ENCODE measurements at regions of chr3 and their contacts with region 1.

Region 1: DNA sequence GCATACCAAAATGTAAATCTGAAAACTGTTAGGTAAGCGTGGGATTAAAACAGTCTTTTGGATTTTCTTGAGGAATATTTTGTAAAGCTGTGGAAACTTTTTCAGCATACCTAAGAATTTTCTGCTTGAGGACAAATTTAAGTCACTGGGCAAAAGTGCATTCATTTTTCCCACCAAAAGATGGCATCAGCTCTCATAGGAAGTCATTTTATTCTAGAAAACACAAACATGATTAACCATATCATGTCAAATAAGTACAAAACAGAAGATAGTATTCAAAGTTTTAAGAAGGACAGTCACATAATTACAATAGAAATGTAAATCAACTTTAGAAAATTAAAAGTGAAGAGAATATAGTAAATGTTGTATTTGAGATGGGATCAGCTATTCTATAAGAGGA is 63.5 kb downstream of the SLC49A4 start:
- DNase-seq: peak; percentile 37
- H3K4me3 Mint-ChIP-seq: no peak overlapping the region
- H3K27ac Mint-ChIP-seq: no peak overlapping the region
- H3K4me1 Mint-ChIP-seq: no peaks in the 10 kb centered on the region
- H3K27me3 Mint-ChIP-seq: no peaks in the 10 kb centered on the region
- CTCF ChIP-seq: peak; percentile 37

Region 2: DNA sequence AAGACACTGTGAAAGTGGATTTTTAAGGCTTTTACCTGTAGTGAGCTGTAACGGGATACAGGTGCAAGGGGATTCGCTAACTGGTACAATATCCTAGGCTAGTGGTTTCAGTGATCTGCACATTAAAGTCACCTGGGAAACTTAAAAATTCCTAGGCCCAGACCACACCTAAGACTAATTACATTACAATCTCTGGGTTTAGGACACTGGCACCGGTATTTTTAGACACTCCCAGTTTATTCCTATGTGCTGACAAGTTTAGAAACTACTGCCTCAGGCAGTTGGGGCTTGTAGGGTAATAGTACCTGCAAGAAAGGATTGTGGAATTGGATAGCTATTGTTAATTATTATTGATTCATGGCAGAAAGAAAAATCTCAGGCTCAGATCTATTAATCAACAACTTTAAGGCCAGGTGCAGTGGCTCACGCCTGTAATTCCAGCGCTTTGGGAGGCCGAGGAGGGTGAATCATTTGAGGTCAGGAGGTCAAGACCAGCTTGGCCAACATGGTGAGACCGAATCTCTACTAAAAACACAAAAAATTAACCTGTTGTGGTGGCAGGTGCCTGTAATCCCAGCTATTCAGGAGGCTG is 725.3 kb before region 1 on chr3:
- CTCF ChIA-PET with region 1: no interaction called
- POLR2A ChIA-PET with region 1: no interaction called
- intact Hi-C with region 1: no loop called
- DNase-seq: no peak
- H3K4me3 Mint-ChIP-seq: no peak overlapping the region
- H3K27ac Mint-ChIP-seq: no peak overlapping the region
- H3K4me1 Mint-ChIP-seq: no peaks in the 10 kb centered on the region
- H3K27me3 Mint-ChIP-seq: no peaks in the 10 kb centered on the region
- CTCF ChIP-seq: no peak

Region 3: DNA sequence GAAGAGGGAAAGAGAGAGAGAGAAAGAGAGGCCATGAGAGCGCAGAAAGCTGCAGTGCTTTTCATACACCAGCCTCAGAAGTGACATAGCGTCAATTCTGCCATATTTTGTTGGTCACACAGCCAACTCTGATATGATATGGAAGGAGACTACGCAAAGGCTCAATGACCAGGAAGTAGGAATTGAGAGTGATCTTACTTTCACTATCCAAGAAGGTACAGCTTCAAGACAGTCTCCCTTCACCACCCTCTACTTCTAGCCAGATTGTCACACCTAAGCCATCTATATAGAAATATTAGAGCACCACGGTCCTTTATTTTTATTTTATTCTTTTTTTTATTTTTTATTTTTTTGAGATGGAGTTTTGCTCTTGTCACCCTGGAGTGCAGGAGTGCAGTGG is 259.8 kb before region 1 on chr3:
- CTCF ChIA-PET with region 1: no interaction called
- POLR2A ChIA-PET with region 1: no interaction called
- intact Hi-C with region 1: no loop called
- DNase-seq: no peak
- H3K4me3 Mint-ChIP-seq: no peak overlapping the region
- H3K27ac Mint-ChIP-seq: no peak overlapping the region
- H3K4me1 Mint-ChIP-seq: no peaks in the 10 kb centered on the region
- H3K27me3 Mint-ChIP-seq: peaks cover 7% of the 10 kb centered on the region
- CTCF ChIP-seq: no peak

Region 4: GRCh38 chr3:123258811-123259420 is 400.5 kb after region 1 on chr3:
- CTCF ChIA-PET with region 1: interaction called, 6 read pairs
- POLR2A ChIA-PET with region 1: no interaction called
- intact Hi-C with region 1: loop called (anchors 2 kb)
- DNase-seq: peak; percentile 55
- H3K4me3 Mint-ChIP-seq: no peak overlapping the region
- H3K27ac Mint-ChIP-seq: no peak overlapping the region
- H3K4me1 Mint-ChIP-seq: no peaks in the 10 kb centered on the region
- H3K27me3 Mint-ChIP-seq: no peaks in the 10 kb centered on the region
- CTCF ChIP-seq: peak; percentile 51